ENCODE measurements at regions of chr14 and their contacts with region 1.

Region 1: DNA sequence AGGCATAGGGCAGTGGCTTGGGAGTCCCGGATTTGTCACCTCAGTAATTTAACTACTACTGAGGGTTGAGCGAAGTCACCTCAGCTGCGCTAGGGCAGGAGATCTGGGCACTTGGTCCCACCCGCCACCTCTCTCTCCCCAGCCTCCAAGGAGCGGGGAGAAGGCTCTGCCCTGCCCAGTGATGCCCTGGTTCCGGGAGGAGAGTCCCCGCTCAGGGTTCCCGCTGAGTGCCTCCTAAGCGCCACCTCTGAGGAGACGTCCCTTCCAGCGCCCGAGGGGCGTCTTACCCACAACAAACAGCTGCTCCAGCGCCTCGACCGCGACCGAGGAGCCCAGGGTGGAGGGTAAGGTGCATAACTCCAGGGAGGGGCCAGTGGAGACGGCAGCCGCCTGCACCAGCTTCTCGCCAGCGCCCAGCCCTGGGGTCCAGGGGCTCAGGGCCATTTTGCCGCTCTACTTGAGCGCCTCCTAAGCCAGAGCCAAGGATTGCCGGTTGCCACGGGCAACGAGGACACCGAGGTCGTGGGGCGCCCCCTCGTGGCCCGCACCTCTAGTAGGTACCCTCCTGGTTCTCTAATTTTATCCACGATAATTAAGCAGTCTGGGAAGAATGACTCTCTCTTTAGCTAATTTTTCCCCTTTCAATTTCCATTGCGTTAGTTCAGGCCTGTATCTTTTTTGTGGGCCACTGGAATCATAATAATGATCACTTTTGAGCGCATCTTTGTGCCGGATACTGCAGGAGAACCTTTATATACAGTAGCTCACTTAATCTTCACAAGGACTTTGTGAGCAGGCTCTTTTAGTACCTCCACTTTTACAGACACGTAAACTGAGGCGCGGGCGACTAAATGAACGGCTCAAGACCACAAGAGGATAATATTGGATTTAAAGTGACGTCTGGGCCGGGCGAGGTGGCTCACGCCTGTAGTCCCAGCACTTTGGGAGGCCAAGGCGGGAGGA is at the start of gene CCDC175:
- DNase-seq: peak; percentile 93
- ATAC-seq: peak; percentile 99
- H3K4me3 Mint-ChIP-seq: peak within 1 kb of the TSS; percentile 68
- H3K27ac Mint-ChIP-seq: no peak within 1 kb of the TSS
- H3K4me1 Mint-ChIP-seq: peaks cover 7% of the 10 kb centered on the region
- H3K27me3 Mint-ChIP-seq: peaks cover 12% of the 10 kb centered on the region
- total RNA-seq, gene CCDC175: not detected

Region 2: DNA sequence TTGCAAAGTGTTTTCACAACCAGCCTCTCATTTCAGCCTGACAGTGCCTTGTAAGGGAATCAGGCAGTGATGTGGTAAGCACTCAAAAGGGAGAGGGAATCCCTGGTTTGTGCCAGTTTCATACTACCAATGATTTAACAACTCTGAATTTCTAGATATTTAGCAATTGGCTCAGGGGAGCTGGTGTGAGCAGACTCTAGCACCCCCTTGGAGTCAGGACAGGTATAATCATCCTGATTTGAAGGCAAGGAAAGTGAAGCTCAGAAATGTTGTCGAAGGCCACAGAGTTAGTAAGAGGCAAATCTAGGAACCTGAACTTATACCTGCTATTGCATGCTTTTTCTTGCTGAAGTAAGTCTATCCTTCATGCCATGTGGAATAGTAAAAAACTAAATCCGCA is 1002.0 kb before region 1 on chr14:
- CTCF ChIA-PET with region 1: no interaction called
- POLR2A ChIA-PET with region 1: no interaction called
- intact Hi-C with region 1: no loop called
- DNase-seq: peak; percentile 29
- ATAC-seq: no peak
- H3K4me3 Mint-ChIP-seq: no peak overlapping the region
- H3K27ac Mint-ChIP-seq: no peak overlapping the region
- H3K4me1 Mint-ChIP-seq: peaks cover 39% of the 10 kb centered on the region
- H3K27me3 Mint-ChIP-seq: no peaks in the 10 kb centered on the region

Region 3: GRCh38 chr14:59028476-59029202 is 548.0 kb before region 1 on chr14:
- CTCF ChIA-PET with region 1: interaction called, 3 read pairs
- POLR2A ChIA-PET with region 1: no interaction called
- intact Hi-C with region 1: loop called in 1 of 2 experiments (anchors 2 kb)
- DNase-seq: peak; percentile 66
- ATAC-seq: peak; percentile 79
- H3K4me3 Mint-ChIP-seq: no peak overlapping the region
- H3K27ac Mint-ChIP-seq: no peak overlapping the region
- H3K4me1 Mint-ChIP-seq: peaks cover 2% of the 10 kb centered on the region
- H3K27me3 Mint-ChIP-seq: peaks cover 12% of the 10 kb centered on the region

Region 4: GRCh38 chr14:59464486-59465315 is 111.9 kb before region 1 on chr14:
- CTCF ChIA-PET with region 1: interaction called, 4 read pairs
- POLR2A ChIA-PET with region 1: no interaction called
- intact Hi-C with region 1: loop called in 1 of 2 experiments (anchors 1 kb)
- DNase-seq: peak; percentile 68
- ATAC-seq: peak; percentile 77
- H3K4me3 Mint-ChIP-seq: peak overlapping the region; percentile 73
- H3K27ac Mint-ChIP-seq: no peak overlapping the region
- H3K4me1 Mint-ChIP-seq: peaks cover 7% of the 10 kb centered on the region
- H3K27me3 Mint-ChIP-seq: peaks cover 3% of the 10 kb centered on the region

Region 5: GRCh38 chr14:59500732-59501131 is 75.9 kb before region 1 on chr14:
- CTCF ChIA-PET with region 1: interaction called, 12 read pairs
- POLR2A ChIA-PET with region 1: no interaction called
- intact Hi-C with region 1: no loop called
- DNase-seq: no peak
- ATAC-seq: no peak
- H3K4me3 Mint-ChIP-seq: no peak overlapping the region
- H3K27ac Mint-ChIP-seq: no peak overlapping the region
- H3K4me1 Mint-ChIP-seq: peaks cover 5% of the 10 kb centered on the region
- H3K27me3 Mint-ChIP-seq: no peaks in the 10 kb centered on the region

Region 6: DNA sequence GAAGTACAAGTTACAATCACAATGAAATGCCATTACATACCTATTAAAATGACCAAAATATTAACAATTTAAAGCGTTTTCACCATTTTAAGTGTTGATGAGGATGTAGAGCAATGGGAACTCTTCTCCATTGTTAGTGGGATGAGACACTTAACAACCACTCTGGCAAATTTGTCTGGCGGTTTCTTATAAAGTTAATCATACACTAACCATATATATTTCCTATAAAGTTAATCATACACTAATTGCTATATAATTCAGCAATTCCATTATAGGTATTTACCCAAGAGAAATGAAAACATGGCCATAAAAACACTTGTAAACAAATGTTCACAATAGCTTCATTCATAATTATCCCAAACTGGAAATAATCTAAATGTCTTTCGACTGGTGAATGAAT is 56.4 kb before region 1 on chr14:
- CTCF ChIA-PET with region 1: no interaction called
- POLR2A ChIA-PET with region 1: no interaction called
- intact Hi-C with region 1: no loop called
- DNase-seq: no peak
- ATAC-seq: no peak
- H3K4me3 Mint-ChIP-seq: no peak overlapping the region
- H3K27ac Mint-ChIP-seq: no peak overlapping the region
- H3K4me1 Mint-ChIP-seq: no peaks in the 10 kb centered on the region
- H3K27me3 Mint-ChIP-seq: peaks cover 10% of the 10 kb centered on the region

Region 7: DNA sequence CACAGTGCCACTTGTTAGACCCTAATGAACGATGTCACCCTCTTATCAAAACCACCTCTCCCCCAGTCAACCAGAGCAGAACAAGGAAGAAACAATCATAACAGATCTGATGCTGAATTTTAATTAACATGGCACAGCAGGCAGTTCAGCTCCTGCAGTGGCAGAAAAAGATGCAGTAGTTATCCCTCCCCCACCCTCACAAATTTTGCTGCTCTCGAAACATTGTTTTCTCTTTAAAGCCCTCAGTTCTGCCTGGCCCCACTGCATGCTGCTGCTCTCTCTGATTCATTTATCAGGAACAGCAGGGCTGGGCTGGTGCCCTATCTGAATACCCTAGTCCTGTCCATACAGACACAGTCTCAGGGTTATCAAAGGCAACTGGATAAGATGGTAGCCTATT is 12.2 kb before region 1 on chr14:
- CTCF ChIA-PET with region 1: interaction called, 10 read pairs
- POLR2A ChIA-PET with region 1: no interaction called
- intact Hi-C with region 1: no loop called
- DNase-seq: no peak
- ATAC-seq: no peak
- H3K4me3 Mint-ChIP-seq: no peak overlapping the region
- H3K27ac Mint-ChIP-seq: no peak overlapping the region
- H3K4me1 Mint-ChIP-seq: no peaks in the 10 kb centered on the region
- H3K27me3 Mint-ChIP-seq: peaks cover 12% of the 10 kb centered on the region